CD4-positive, alpha-beta T cell (primary cell): ENCODE measurements at regions of chr6 and their contacts with region 1.

Region 1: GRCh38 chr6:156791320-156791850 is 14.2 kb downstream of the ARID1B start:
- DNase-seq: peak in 5 of 14 experiments; percentile 32 to 81 (median 47)
- ATAC-seq: peak; percentile 92
- H3K4me3 ChIP-seq: no peak overlapping the region
- H3K4me3 Mint-ChIP-seq: peak overlapping the region; percentile 63
- H3K27ac ChIP-seq: no peak overlapping the region
- H3K27ac Mint-ChIP-seq: peak overlapping the region; percentile 42
- H3K4me1 ChIP-seq: peaks cover 55% of the 10 kb centered on the region
- H3K4me1 Mint-ChIP-seq: peaks cover 100% of the 10 kb centered on the region
- H3K27me3 ChIP-seq: no peaks in the 10 kb centered on the region
- H3K27me3 Mint-ChIP-seq: no peaks in the 10 kb centered on the region
- CTCF ChIP-seq: no peak

Region 2: DNA sequence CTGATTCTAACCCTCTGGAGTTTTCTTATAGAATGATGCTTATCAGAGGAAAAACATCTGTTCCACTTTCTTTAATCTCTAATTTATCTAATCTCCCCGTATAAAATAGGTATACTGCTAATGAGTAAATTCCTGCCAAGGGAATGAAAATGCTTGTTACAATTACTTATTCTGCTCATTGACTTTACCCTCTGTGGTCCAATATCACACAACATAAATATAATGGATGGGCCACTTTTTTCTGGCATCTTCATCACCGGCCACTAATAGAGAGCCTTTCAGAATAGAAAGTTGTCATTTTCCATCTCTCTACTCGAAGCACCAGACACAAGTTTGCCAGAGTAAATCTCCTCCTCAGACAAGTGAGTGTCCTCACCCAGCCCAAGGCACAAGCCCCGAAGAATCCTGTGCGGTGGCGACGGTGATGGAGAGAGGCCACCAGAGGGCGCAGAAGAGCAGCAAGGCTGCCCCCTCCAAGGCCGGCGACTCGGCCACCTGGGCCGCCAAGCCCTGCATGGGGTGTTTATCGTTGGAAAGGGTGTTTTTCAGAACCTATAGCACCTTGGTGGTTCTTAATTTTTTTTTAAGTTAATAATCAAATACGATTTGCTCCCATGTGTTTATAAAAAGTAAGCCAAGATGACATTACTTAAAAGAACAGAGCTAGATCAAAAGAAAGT is 227.1 kb before region 1 on chr6:
- CTCF ChIA-PET with region 1: no interaction called
- POLR2A ChIA-PET with region 1: no interaction called
- intact Hi-C with region 1: no loop called
- DNase-seq: peak; percentile 47 to 85 (median 74)
- ATAC-seq: peak; percentile 94
- H3K4me3 ChIP-seq: no peak overlapping the region
- H3K4me3 Mint-ChIP-seq: no peak overlapping the region
- H3K27ac ChIP-seq: no peak overlapping the region
- H3K27ac Mint-ChIP-seq: no peak overlapping the region
- H3K4me1 ChIP-seq: peaks cover 6% of the 10 kb centered on the region
- H3K4me1 Mint-ChIP-seq: peaks cover 4% of the 10 kb centered on the region
- H3K27me3 ChIP-seq: no peaks in the 10 kb centered on the region
- H3K27me3 Mint-ChIP-seq: peaks cover 16% of the 10 kb centered on the region
- CTCF ChIP-seq: peak; percentile 89

Region 3: DNA sequence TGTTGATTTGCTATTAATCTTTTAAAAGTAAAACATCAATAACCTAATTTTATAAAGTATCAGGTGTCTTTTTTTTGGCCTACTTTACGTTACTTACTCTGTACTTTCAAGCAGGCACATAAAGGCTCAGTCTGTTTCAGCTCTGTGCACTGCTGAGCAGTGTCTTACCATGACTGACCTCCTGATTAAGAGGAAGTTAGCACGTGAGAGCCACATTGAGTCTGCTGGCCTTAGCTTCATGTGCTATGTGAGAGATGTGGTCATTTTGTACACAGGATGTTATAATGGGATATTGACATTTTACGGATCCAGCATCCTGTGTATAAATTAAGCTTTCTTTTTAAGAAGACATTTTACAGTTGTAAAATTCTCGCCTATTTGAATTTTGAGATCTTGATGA is 17.6 kb after region 1 on chr6:
- CTCF ChIA-PET with region 1: interaction called, 5 read pairs
- POLR2A ChIA-PET with region 1: interaction called, 4 read pairs
- intact Hi-C with region 1: loop called in 1 of 2 experiments (anchors 2 kb)
- DNase-seq: peak in 2 of 14 experiments; percentile 27
- ATAC-seq: no peak
- H3K4me3 ChIP-seq: no peak overlapping the region
- H3K4me3 Mint-ChIP-seq: no peak overlapping the region
- H3K27ac ChIP-seq: no peak overlapping the region
- H3K27ac Mint-ChIP-seq: no peak overlapping the region
- H3K4me1 ChIP-seq: peaks cover 42% of the 10 kb centered on the region
- H3K4me1 Mint-ChIP-seq: peaks cover 93% of the 10 kb centered on the region
- H3K27me3 ChIP-seq: no peaks in the 10 kb centered on the region
- H3K27me3 Mint-ChIP-seq: no peaks in the 10 kb centered on the region
- CTCF ChIP-seq: no peak

Region 4: GRCh38 chr6:156942266-156942665 is 150.9 kb after region 1 on chr6:
- CTCF ChIA-PET with region 1: no interaction called
- POLR2A ChIA-PET with region 1: no interaction called
- intact Hi-C with region 1: loop called in 1 of 2 experiments (anchors 5 kb)
- DNase-seq: no peak
- ATAC-seq: no peak
- H3K4me3 ChIP-seq: no peak overlapping the region
- H3K4me3 Mint-ChIP-seq: no peak overlapping the region
- H3K27ac ChIP-seq: no peak overlapping the region
- H3K27ac Mint-ChIP-seq: peak overlapping the region; percentile 15
- H3K4me1 ChIP-seq: peaks cover 8% of the 10 kb centered on the region
- H3K4me1 Mint-ChIP-seq: peaks cover 88% of the 10 kb centered on the region
- H3K27me3 ChIP-seq: no peaks in the 10 kb centered on the region
- H3K27me3 Mint-ChIP-seq: no peaks in the 10 kb centered on the region
- CTCF ChIP-seq: no peak